A673 (cell line): ENCODE measurements at regions of chr16 and their contacts with region 1.

Region 1: DNA sequence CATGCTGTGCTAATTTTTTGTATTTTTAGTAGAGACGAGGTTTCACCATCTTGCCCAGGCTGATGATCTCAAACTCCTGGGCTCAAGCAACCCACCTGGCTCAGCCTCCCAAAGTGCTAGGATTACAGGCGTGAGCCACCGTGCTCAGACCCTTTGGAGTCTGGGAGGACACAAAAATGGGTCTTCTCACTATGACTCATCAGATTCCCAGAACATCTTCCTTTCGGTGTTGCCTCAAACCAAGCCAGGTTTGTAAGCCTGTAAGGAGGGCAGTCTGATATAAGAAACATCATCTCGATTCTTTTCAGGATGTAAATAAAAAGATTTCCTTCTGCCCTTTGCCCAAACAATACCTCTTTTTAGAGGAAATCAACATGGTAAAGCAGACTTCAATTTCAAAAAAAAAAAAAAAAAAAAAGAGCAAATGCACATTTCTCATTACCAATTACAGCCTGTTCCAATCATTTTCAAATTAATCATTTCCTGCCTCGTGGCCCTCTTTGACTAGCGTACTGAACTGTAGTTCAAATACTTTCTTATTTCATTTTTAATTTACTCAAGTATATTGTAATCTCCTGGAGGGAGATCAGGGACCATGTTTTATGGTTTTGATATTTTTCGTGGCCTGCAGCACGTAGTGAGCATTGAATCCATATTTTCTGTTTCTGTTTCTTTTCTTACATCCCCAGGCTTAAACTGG is 409.6 kb downstream of the GRIN2A start:
- DNase-seq: no peak
- H3K4me3 ChIP-seq: no peak overlapping the region
- H3K27ac ChIP-seq: no peak overlapping the region
- H3K4me1 ChIP-seq: no peaks in the 10 kb centered on the region
- H3K27me3 ChIP-seq: no peaks in the 10 kb centered on the region
- CTCF ChIP-seq: no peak

Region 2: GRCh38 chr16:9736547-9736946 is 36.1 kb before region 1 on chr16:
- CTCF ChIA-PET with region 1: no interaction called
- POLR2A ChIA-PET with region 1: no interaction called
- intact Hi-C with region 1: no loop called
- DNase-seq: no peak
- H3K4me3 ChIP-seq: no peak overlapping the region
- H3K27ac ChIP-seq: no peak overlapping the region
- H3K4me1 ChIP-seq: no peaks in the 10 kb centered on the region
- H3K27me3 ChIP-seq: no peaks in the 10 kb centered on the region
- CTCF ChIP-seq: no peak

Region 3: GRCh38 chr16:9801651-9802050 is 29.0 kb after region 1 on chr16:
- CTCF ChIA-PET with region 1: no interaction called
- POLR2A ChIA-PET with region 1: no interaction called
- intact Hi-C with region 1: loop called (anchors 1 kb)
- DNase-seq: no peak
- H3K4me3 ChIP-seq: no peak overlapping the region
- H3K27ac ChIP-seq: no peak overlapping the region
- H3K4me1 ChIP-seq: no peaks in the 10 kb centered on the region
- H3K27me3 ChIP-seq: peaks cover 6% of the 10 kb centered on the region
- CTCF ChIP-seq: no peak

Region 4: GRCh38 chr16:9908613-9909012 is 135.9 kb after region 1 on chr16:
- CTCF ChIA-PET with region 1: no interaction called
- POLR2A ChIA-PET with region 1: no interaction called
- intact Hi-C with region 1: no loop called
- DNase-seq: no peak
- H3K4me3 ChIP-seq: no peak overlapping the region
- H3K27ac ChIP-seq: no peak overlapping the region
- H3K4me1 ChIP-seq: no peaks in the 10 kb centered on the region
- H3K27me3 ChIP-seq: no peaks in the 10 kb centered on the region
- CTCF ChIP-seq: no peak